ENCODE measurements at regions of chr2 and their contacts with region 1.

Region 1: DNA sequence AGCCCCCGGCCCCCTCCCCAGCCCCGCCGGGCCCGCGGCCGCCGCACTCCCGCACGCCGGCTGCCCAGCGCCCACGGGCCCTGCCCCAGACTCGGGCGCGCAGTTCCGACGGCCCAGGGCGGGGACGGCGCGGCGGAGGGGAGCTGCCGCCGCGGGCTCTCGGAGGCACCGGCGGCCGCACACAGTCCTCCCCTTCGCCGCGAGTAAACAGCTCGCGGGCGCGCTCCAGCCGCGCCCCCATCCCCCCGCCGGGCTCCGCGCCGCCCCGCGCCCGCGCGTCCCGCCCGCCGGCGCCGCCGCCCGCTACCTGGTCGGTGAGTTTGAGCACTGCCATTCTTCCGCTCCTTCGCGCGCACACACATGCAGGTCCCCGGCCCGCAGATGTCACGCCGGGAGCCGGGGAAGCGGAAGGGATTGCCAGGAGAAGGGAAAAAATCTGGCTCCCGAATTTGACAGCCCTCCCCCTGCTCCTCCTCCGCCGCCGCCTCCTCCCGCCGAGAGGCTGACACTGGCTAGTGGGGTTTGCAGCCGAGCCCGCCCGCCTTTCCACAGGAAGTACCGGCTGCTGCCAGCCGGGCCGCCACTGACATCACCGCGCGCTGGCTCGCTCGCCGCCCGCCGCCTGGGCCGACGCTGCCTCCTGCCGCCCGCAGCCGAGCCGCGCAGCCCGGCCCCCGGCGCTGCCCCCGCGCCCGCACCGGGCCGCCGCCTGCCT is at the start of gene ANKRD44:
- DNase-seq: peak; percentile 96
- ATAC-seq: peak; percentile 98
- total RNA-seq, gene ANKRD44: 7.4 TPM

Region 2: DNA sequence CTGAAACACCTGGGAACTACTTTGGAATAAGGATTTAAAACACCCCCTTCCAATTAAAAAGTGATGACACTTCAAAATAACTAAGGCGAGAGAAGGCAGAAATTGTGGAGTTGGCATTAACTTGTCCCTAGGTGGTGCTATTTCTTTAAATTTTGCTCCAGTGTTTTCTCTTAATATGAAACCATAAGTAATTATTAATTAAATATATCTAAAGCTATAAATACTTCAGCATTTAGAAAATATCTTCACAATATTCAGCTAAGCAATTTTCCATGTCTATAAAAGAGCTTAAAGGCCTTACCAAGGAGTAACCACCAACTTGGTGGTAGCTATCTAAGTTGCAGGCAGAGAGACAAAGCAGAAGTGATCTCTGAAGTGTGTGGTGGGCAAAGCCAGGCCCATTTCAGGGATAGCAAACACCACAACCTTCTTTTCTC is 197.1 kb before region 1 on chr2:
- intact Hi-C with region 1: loop called (anchors 10 kb)
- DNase-seq: no peak
- ATAC-seq: no peak

Region 3: DNA sequence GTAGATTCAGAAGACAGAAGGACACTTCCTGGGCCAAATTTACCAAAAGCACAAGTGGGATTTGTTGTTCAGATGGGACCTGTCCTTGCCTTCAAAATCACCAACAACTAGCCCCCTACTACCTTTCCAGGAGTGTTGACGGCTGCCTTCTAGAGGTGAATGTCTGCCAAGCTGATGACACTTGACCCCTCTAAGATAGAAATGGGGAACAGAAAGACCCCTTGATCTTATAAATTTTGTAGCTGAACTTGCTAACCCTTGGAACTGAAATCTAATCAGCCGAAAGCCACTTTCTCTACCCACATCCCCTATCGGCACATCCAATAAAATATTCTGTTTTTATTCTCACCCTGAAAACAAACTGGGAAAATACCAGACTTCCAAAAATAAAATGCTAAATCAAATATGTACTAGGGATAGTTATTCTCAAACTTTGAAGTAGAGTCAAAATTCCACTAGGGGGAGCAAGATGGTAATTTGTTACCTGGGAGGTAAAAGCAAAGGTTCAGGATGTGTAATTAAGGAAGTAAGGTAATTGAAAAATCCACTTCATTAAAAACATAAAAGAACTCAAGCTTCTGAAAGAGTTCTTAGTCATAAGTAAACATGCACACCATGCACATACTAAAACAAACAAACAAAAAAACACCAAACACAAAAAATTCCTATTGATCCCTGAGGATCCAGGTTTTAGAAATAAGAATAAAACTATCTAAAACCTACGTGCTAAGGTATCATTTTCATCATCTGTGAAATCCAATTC is 119.1 kb before region 1 on chr2:
- intact Hi-C with region 1: loop called (anchors 2 kb)
- DNase-seq: no peak
- ATAC-seq: peak; percentile 55